ENCODE measurements at regions of chr18 and their contacts with region 1.

Region 1: GRCh38 chr18:31410716-31411483 is 34.3 kb downstream of the DSG4 start:
- DNase-seq: no peak
- H3K4me3 ChIP-seq: no peak overlapping the region
- H3K27ac ChIP-seq: no peak overlapping the region
- H3K4me1 ChIP-seq: no peaks in the 10 kb centered on the region
- H3K27me3 ChIP-seq: no peaks in the 10 kb centered on the region
- CTCF ChIP-seq: no peak

Region 2: GRCh38 chr18:30982285-30982992 is 428.5 kb before region 1 on chr18:
- CTCF ChIA-PET with region 1: no interaction called
- POLR2A ChIA-PET with region 1: interaction called, 15 read pairs
- intact Hi-C with region 1: loop called (anchors 10 kb)
- DNase-seq: no peak
- H3K4me3 ChIP-seq: no peak overlapping the region
- H3K27ac ChIP-seq: no peak overlapping the region
- H3K4me1 ChIP-seq: no peaks in the 10 kb centered on the region; the same call in 1 of the 2 replicates
- H3K27me3 ChIP-seq: no peaks in the 10 kb centered on the region
- CTCF ChIP-seq: no peak

Region 3: DNA sequence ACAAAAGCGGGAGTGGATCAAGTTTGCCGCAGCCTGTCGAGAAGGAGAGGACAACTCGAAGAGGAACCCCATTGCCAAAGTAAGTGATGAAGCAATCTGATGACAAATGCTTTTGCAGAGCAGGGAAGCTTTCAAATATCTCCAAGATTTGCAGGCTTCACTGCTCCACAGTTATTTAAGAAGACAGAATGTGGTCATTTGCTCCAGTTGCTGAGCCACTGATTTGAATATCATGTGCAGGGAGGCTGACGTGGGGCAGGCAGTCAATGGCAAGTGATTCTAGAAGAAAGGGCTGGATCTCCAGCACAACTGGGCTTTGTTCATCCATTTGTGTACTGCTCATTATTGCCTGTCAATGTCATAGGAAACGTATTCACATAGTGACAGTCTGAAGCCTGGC is 24.2 kb before region 1 on chr18:
- CTCF ChIA-PET with region 1: no interaction called
- POLR2A ChIA-PET with region 1: no interaction called
- intact Hi-C with region 1: no loop called
- DNase-seq: peak in 1 of 2 experiments; percentile 42
- H3K4me3 ChIP-seq: no peak overlapping the region
- H3K27ac ChIP-seq: no peak overlapping the region
- H3K4me1 ChIP-seq: no peaks in the 10 kb centered on the region
- H3K27me3 ChIP-seq: no peaks in the 10 kb centered on the region
- CTCF ChIP-seq: no peak

Region 4: GRCh38 chr18:31563778-31564177 is 152.9 kb after region 1 on chr18:
- CTCF ChIA-PET with region 1: no interaction called
- POLR2A ChIA-PET with region 1: interaction called, 10 read pairs
- intact Hi-C with region 1: no loop called
- DNase-seq: no peak
- H3K4me3 ChIP-seq: no peak overlapping the region
- H3K27ac ChIP-seq: no peak overlapping the region
- H3K4me1 ChIP-seq: no peaks in the 10 kb centered on the region
- H3K27me3 ChIP-seq: no peaks in the 10 kb centered on the region
- CTCF ChIP-seq: peak; percentile 31; the same call in 1 of the 2 replicates